Activated CD4-positive, alpha-beta T cell treated with anti-CD3 and anti-CD28 coated beads for 36 hours (primary cell): ENCODE measurements at regions of chr5 and their contacts with region 1.

Region 1: GRCh38 chr5:43313035-43313853 is at the start of gene HMGCS1:
- DNase-seq: peak; percentile 99
- ATAC-seq: peak; percentile 90
- H3K4me3 Mint-ChIP-seq: peak within 1 kb of the TSS; percentile 93
- H3K27ac Mint-ChIP-seq: peak within 1 kb of the TSS; percentile 96
- H3K4me1 Mint-ChIP-seq: peaks cover 71% of the 10 kb centered on the region
- H3K27me3 Mint-ChIP-seq: no peaks in the 10 kb centered on the region
- total RNA-seq, gene HMGCS1: 95.2 to 102 TPM

Region 2: DNA sequence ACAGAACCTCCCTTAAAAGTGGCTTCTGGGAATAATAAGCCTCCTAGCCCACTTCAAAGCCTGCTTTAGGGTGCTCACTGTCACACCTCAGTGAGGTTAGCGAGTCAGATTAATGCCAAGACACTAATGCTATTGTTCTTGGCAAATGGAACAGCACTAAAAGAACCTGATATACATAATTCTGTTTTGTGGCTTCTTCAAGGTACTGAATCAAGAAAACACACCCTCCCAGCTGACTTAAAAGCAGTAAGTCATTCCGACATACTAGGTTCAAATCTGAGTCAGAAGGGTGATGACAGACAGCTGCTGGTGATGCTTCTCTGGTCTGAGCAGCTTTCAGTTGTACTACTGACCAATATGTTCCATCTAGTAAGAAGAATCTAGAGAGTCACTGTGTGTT is 1564.6 kb before region 1 on chr5:
- CTCF ChIA-PET with region 1: no interaction called
- POLR2A ChIA-PET with region 1: no interaction called
- intact Hi-C with region 1: loop called in 1 of 2 experiments (anchors 5 kb)
- DNase-seq: peak; percentile 59
- ATAC-seq: peak; percentile 94
- H3K4me3 Mint-ChIP-seq: no peak overlapping the region
- H3K27ac Mint-ChIP-seq: no peak overlapping the region
- H3K4me1 Mint-ChIP-seq: peaks cover 28% of the 10 kb centered on the region
- H3K27me3 Mint-ChIP-seq: no peaks in the 10 kb centered on the region

Region 3: GRCh38 chr5:43008369-43009153 is 304.7 kb before region 1 on chr5:
- CTCF ChIA-PET with region 1: no interaction called
- POLR2A ChIA-PET with region 1: no interaction called
- intact Hi-C with region 1: loop called in 1 of 2 experiments (anchors 5 kb)
- DNase-seq: peak; percentile 94
- ATAC-seq: peak; percentile 64
- H3K4me3 Mint-ChIP-seq: peak overlapping the region; percentile 76
- H3K27ac Mint-ChIP-seq: peak overlapping the region; percentile 94
- H3K4me1 Mint-ChIP-seq: peaks cover 21% of the 10 kb centered on the region
- H3K27me3 Mint-ChIP-seq: no peaks in the 10 kb centered on the region

Region 4: GRCh38 chr5:43105369-43106289 is 207.6 kb before region 1 on chr5:
- CTCF ChIA-PET with region 1: interaction called, 4 read pairs
- POLR2A ChIA-PET with region 1: interaction called, 3 read pairs
- intact Hi-C with region 1: loop called (anchors 1 kb)
- DNase-seq: peak; percentile 93
- ATAC-seq: peak; percentile 91
- H3K4me3 Mint-ChIP-seq: peak overlapping the region; percentile 71
- H3K27ac Mint-ChIP-seq: peak overlapping the region; percentile 91
- H3K4me1 Mint-ChIP-seq: peaks cover 43% of the 10 kb centered on the region
- H3K27me3 Mint-ChIP-seq: no peaks in the 10 kb centered on the region

Region 5: DNA sequence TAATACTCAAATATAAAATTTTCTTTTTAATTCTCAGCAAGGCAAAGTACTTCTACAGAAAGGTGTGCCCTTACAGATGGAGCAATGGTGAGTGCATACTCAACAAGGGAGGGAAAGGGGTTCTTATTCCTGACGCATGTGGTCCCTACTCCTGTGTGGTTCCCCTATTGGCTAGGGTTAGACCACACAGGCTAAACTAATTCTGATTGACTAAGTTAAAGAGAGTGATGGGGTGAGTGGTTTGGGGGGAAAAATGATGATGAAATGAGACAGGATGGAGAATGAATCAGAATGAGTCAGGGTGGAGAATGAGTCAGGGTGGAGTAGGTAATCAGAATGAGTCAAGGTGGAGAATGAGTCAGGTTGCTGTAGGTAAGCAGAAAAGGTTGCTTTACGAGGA is 22.9 kb after region 1 on chr5:
- CTCF ChIA-PET with region 1: interaction called, 5 read pairs
- POLR2A ChIA-PET with region 1: no interaction called
- intact Hi-C with region 1: loop called (anchors 1 kb)
- DNase-seq: peak; percentile 45
- ATAC-seq: peak; percentile 87
- H3K4me3 Mint-ChIP-seq: no peak overlapping the region
- H3K27ac Mint-ChIP-seq: peak overlapping the region; percentile 80
- H3K4me1 Mint-ChIP-seq: peaks cover 16% of the 10 kb centered on the region
- H3K27me3 Mint-ChIP-seq: peaks cover 30% of the 10 kb centered on the region

Region 6: DNA sequence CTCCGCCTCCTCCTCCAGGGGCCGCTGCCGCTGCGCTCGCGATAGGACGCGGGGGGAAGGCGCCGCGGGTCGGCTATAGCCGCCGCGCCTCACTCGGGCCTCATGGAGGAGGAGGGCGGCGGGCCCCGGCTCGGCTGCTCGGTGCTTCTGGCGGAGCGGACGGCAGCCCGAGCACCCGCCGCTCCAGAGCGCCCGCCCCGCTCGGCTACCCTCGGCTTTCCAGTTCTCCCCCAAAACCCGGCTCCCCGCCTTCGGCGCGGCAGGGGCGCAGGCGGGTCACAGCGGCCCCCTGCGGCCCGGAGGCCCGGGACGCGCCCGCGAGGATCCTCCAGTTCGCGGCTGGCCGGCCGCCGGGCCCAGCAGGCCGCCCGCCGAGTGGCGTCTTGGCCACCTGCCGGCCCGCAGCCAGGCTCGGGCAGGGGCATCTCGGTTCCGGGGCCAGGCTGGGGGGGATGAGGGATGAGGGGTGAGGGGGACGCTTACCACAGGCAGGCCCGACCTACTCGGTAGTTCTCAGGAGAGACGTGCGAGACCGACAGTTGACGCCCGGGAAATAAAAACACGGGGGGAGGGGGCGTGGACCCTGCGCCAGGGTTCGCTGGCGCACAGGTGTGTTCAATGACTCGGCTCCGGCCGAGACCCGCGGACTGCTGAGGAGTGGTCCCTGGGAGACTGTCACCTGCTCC is 243.8 kb after region 1 on chr5 and contains the start of gene PAIP1:
- CTCF ChIA-PET with region 1: no interaction called
- POLR2A ChIA-PET with region 1: no interaction called
- intact Hi-C with region 1: loop called in 1 of 2 experiments (anchors 2 kb)
- DNase-seq: peak; percentile 91
- ATAC-seq: peak; percentile 87
- H3K4me3 Mint-ChIP-seq: peak within 1 kb of the TSS; percentile 88
- H3K27ac Mint-ChIP-seq: peak within 1 kb of the TSS; percentile 99
- H3K4me1 Mint-ChIP-seq: peaks cover 18% of the 10 kb centered on the region
- H3K27me3 Mint-ChIP-seq: peaks cover 2% of the 10 kb centered on the region
- total RNA-seq, gene PAIP1: 51.7 to 55.1 TPM